MCF 10A (cell line): ENCODE measurements at regions of chr5 and their contacts with region 1.

Region 1: DNA sequence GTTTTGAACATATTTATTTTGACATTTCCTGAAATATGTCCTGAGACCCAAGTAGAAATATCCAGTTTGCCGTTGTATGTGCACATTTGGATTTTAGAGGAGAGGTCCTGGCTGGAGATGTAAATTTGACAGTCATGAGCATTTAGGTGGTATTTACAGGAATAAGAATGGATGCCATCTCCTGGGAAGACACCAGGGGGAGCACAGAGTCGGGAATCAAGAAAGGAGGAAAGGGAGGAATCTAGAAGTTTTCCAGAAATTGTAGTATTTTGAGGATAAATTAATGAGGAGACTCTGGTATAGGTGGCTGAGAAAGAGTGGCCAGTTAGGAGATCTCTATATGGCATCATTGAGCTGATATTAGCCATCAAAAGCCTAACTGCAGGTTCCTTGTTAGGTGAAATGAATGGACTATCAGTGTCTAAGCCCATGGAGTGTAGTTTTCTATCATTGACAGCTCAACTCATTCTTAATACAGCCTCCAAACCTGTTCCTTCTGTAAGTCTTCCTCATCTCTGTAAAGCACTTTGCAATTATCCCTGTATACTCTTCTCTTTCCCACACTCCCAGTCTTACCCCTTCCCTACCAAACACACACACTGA is 7.2 kb downstream of the GAPT start:
- DNase-seq: peak; percentile 58
- H3K4me3 Mint-ChIP-seq: no peak overlapping the region
- H3K27ac Mint-ChIP-seq: no peak overlapping the region
- H3K4me1 Mint-ChIP-seq: no peaks in the 10 kb centered on the region
- H3K27me3 Mint-ChIP-seq: peaks cover 95% of the 10 kb centered on the region
- CTCF ChIP-seq: peak; percentile 76

Region 2: DNA sequence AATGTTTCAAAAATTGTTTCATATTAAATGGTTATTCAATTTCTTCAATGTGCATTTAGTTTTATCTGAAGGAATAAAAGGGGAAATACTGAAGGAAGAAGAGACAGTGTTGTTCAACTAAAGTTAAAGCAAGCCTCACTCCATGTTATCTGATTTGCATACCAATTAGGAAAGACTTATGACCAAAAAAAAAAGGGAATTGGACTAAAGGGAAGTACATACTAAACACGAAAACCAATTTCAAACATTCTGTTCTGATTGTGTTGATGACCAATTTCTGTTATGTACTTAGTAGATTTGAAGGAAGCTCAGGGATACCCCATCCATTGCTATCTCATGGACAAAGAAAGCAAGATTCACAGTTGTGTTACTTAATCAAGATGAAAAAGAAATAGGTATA is 12.2 kb before region 1 on chr5:
- CTCF ChIA-PET with region 1: interaction called, 11 read pairs
- POLR2A ChIA-PET with region 1: no interaction called
- intact Hi-C with region 1: no loop called
- DNase-seq: no peak
- H3K4me3 Mint-ChIP-seq: no peak overlapping the region
- H3K27ac Mint-ChIP-seq: no peak overlapping the region
- H3K4me1 Mint-ChIP-seq: no peaks in the 10 kb centered on the region
- H3K27me3 Mint-ChIP-seq: peaks cover 45% of the 10 kb centered on the region
- CTCF ChIP-seq: no peak

Region 3: DNA sequence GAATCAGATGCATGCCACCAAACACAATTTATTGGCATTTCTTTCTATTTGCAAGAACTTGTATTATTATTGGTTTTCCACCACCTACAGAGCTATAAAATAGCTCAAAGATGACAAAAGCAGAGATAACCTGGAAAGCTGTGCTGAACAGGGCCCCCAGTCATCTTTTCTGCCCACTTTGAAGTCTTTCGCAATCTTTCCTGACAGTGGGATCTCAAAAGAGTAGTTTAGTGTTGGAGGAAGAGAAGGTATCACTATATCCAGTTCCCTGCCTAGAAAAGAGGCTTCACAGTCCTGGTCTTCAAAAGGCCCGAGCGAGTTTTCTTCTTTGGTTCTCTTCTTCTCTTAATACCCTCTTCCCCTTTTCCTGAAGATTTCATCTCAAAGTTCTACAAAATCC is 315.4 kb after region 1 on chr5:
- CTCF ChIA-PET with region 1: interaction called, 5 read pairs
- POLR2A ChIA-PET with region 1: no interaction called
- intact Hi-C with region 1: loop called (anchors 1 kb)
- DNase-seq: no peak
- H3K4me3 Mint-ChIP-seq: no peak overlapping the region
- H3K27ac Mint-ChIP-seq: no peak overlapping the region
- H3K4me1 Mint-ChIP-seq: no peaks in the 10 kb centered on the region
- H3K27me3 Mint-ChIP-seq: peaks cover 40% of the 10 kb centered on the region
- CTCF ChIP-seq: no peak